Activated naive CD4-positive, alpha-beta T cell treated with anti-CD3 and anti-CD28 coated beads, Interleukin-2, amount 10 ng/mL, durations not matched to agents 7 days and 5 days (primary cell): ENCODE measurements at regions of chr17 and their contacts with region 1.

Region 1: DNA sequence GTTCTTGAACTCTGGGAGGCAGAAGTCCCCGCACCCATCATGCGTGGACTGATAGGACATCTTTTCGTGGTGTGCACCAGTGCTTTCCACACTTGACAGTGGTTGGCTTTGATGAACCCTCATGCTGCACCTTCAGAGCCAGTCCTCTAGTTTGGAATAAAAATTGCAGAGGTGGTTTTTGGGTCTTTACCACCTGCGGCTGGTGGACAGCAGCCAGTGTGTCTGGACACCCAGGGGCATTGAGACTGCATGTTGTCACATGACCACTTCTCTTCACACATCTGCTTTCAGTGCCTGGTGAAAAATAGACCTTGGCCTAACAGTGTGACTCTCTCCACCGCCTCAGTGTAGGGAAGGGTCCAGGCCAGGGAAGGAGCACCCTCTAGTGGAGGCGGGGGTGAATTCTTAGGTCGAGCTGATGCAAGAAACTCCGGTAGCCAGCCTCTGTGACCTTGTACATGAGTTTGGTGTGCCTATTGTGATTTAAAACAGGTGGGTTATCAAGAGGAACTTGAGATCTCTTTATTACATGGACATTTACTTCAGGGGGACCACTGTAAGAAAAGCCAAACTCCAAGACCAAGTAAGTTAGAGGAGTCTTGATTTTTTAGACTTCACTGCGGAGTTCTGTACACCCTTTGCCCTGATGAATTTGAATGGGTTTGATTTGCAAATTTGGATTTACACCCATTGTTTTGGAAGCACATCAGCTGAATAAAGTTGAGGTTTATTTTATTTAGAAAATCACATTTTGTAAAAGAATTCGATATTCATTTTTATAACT is 17.9 kb downstream of the GOSR2 start:
- DNase-seq: peak; percentile 83
- H3K4me3 Mint-ChIP-seq: no peak overlapping the region
- H3K27ac Mint-ChIP-seq: no peak overlapping the region
- H3K4me1 Mint-ChIP-seq: peaks cover 17% of the 10 kb centered on the region
- H3K27me3 Mint-ChIP-seq: no peaks in the 10 kb centered on the region

Region 2: GRCh38 chr17:46841561-46842379 is 99.0 kb before region 1 on chr17:
- CTCF ChIA-PET with region 1: interaction called, 34 read pairs
- DNase-seq: peak; percentile 30
- H3K4me3 Mint-ChIP-seq: no peak overlapping the region
- H3K27ac Mint-ChIP-seq: no peak overlapping the region
- H3K4me1 Mint-ChIP-seq: peaks cover 3% of the 10 kb centered on the region
- H3K27me3 Mint-ChIP-seq: peaks cover 68% of the 10 kb centered on the region

Region 3: DNA sequence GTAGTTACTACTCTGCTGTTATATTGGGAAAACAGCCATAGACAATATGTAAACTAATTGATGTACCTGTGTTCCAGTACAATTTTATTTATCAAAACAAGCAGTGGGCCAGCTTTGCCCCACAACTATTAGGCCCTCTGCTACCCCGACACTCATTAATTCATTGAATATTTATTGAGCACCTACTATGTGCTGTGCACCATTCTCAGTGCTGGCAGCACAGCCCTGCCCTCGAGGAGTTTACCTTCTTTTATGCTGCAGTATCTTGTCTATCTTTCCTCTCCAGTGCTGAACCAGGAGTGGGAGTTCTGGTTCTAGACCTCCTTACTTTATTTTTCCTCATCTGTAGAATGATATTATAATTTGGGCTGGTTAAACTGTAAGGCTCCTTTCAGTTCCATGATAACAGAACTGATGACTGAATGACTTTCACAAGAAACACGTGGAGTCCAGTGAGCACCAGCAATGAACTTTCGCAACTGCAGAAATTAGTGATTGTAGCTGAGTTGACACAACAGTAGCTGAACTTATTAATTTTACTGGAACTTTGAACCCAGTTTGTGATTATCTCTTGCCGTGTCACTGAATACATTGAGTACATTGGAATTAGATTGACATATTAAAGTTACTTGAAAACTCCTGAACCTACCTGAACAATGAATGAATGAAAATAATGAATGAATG is 15.5 kb before region 1 on chr17:
- CTCF ChIA-PET with region 1: interaction called, 10 read pairs
- DNase-seq: no peak
- H3K4me3 Mint-ChIP-seq: no peak overlapping the region
- H3K27ac Mint-ChIP-seq: no peak overlapping the region
- H3K4me1 Mint-ChIP-seq: peaks cover 63% of the 10 kb centered on the region
- H3K27me3 Mint-ChIP-seq: no peaks in the 10 kb centered on the region

Region 4: DNA sequence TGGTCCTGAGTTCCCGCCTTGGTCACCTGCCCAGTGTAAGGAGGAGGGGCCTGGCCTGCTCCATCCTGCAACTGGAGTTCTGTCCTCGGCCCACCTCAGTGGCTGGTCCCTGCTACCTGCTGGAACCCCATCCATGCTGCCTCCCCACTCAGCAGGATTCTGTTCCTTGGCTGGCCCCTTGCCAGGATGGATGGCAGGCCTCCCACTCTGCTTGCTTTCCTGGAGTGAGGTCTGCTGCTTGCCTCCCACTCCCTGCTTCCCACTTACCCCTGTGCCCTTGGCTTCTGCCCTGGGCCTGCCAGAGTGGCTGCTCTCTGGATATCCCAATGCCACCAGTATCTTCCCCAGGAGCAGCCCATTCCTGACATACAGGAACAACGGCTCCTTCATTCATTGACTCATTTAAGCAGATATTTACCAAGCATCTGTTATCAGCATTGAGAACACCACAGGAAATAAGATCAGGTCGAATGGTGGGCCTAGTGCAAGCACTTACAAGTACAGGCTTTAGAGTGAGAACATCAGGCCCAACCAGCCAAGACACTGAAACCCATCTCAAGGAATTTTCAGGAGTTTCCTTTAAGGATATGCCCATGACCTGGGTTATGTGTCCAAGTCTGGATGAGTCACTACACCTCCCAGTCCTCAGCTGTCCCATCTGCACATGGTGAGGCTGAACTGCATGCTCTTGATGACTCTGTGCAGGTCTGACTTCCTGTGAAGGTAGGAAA is 55.2 kb after region 1 on chr17:
- CTCF ChIA-PET with region 1: interaction called, 31 read pairs
- DNase-seq: no peak
- H3K4me3 Mint-ChIP-seq: no peak overlapping the region
- H3K27ac Mint-ChIP-seq: no peak overlapping the region
- H3K4me1 Mint-ChIP-seq: peaks cover under 1% of the 10 kb centered on the region
- H3K27me3 Mint-ChIP-seq: peaks cover 7% of the 10 kb centered on the region

Region 5: GRCh38 chr17:47315451-47316266 is 374.8 kb after region 1 on chr17:
- CTCF ChIA-PET with region 1: interaction called, 18 read pairs
- DNase-seq: peak; percentile 45
- H3K4me3 Mint-ChIP-seq: no peak overlapping the region
- H3K27ac Mint-ChIP-seq: no peak overlapping the region
- H3K4me1 Mint-ChIP-seq: no peaks in the 10 kb centered on the region
- H3K27me3 Mint-ChIP-seq: peaks cover 17% of the 10 kb centered on the region